ENCODE measurements at regions of chr1 and their contacts with region 1.

Region 1: DNA sequence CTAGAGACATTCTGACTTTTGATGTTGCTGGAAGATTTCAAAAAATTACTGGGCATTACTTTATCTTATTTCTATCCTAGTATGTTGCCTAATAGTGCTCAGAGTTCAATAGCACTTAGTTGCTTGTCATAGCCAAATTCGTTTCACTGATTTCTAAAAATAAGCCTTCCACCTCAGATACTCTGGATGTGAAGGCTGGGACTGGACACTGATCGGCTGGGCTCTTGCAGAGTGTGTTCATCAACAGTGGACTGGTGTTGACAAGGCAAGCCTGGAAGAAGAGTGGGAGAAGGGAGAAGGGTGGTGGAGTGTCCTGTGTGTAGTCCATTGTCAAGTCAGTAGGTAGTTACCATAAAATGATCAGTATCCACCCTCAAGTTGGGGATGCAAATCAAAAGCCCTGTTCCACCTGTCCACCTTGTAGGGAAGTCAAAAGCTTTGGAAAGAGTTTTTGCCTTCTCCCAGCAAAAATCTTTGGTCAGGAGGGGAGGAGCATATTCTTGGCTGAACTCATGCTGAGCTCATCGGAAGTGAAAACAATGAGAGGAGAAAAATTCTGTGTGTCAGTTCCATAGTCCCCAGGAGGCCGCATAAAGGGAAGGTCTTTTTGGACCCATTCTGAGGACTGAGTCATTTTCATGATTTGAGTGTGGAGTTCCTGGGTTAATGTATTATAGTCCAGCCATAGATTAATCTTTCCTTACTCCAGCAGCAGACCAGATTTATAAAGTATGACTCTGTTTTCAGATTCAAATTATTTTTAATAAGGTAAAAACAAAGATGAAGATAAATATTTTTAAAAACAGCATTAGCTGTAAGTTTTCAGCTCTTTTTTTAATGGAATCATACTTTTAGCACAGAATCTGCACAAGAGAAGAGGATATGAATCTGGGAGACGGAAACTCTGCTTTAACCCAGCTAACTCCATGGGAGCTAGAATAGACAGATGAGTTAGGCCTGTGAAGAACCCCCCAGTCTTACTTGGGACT is 99.5 kb upstream of the BMP8A start:
- DNase-seq: peak; percentile 24
- H3K4me3 ChIP-seq: no peak overlapping the region
- CTCF ChIP-seq: no peak

Region 2: GRCh38 chr1:39142401-39143151 is 249.4 kb before region 1 on chr1:
- CTCF ChIA-PET with region 1: no interaction called
- POLR2A ChIA-PET with region 1: no interaction called
- DNase-seq: no peak
- H3K4me3 ChIP-seq: no peak overlapping the region
- CTCF ChIP-seq: no peak

Region 3: GRCh38 chr1:39214998-39215873 is 176.7 kb before region 1 on chr1:
- CTCF ChIA-PET with region 1: no interaction called
- POLR2A ChIA-PET with region 1: no interaction called
- DNase-seq: no peak
- H3K4me3 ChIP-seq: no peak overlapping the region
- CTCF ChIP-seq: no peak

Region 4: GRCh38 chr1:39282537-39283216 is 109.3 kb before region 1 on chr1:
- CTCF ChIA-PET with region 1: no interaction called
- POLR2A ChIA-PET with region 1: no interaction called
- DNase-seq: no peak
- H3K4me3 ChIP-seq: no peak overlapping the region
- CTCF ChIP-seq: no peak

Region 5: DNA sequence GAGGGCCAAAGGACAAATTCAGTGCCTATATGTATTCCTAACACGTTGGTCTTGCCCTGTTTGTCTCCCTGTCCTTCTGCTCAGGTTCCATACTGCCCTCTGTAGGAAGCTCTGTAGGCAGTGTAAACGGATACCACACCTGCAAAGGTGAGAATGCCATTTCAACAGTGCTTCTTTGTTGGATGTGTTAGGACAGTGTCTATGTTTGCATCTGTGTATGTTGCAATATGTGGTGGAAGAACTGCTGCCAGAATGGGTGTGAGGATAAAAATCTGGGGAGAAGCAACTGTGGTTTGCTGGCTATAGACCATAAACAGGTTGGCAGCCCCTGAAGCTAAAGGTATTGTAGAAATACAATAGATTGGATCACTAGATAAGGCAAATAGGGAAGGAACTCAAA is 13.6 kb before region 1 on chr1:
- CTCF ChIA-PET with region 1: interaction called, 14 read pairs
- POLR2A ChIA-PET with region 1: no interaction called
- DNase-seq: no peak
- H3K4me3 ChIP-seq: no peak overlapping the region
- CTCF ChIP-seq: no peak

Region 6: GRCh38 chr1:39413902-39414528 is 22.0 kb after region 1 on chr1:
- CTCF ChIA-PET with region 1: interaction called, 90 read pairs
- POLR2A ChIA-PET with region 1: interaction called, 16 read pairs
- DNase-seq: no peak
- H3K4me3 ChIP-seq: peak overlapping the region; percentile 29
- CTCF ChIP-seq: no peak

Region 7: DNA sequence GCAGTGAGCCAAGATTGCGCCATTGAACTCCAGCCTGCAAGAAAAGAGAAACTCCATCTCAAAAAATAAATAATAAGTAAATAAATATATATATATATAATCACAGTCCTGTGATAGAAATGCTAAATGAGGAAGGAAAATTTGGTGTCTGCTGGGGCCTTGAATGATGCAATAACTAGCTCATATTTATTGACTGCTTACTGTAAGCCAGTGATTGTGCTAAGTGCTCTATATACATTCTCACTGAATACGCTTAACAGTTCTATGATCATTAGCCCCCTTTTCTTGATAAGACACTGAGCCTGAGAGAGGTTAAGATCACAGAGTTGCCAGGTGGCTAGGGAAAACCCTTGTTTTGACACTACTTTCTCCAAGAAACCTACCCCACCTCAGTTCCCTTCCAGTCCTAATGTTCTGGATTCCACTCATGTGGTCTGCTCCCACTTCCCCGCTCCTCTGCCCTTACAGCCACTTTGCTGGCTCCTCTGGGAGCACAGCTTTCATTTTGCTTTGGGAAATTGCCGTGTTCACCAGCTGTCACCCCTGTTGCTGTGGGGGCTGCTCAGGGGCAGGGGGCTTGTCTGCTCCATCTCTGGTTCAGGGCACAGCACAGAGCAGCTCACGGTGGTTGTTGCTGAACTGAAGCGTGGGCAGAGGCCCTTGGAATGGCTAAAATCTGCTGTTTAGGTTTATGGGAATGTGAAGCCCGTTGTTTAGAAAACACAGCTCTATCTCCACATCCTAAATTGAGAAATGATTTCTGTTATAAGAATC is 97.0 kb after region 1 on chr1:
- CTCF ChIA-PET with region 1: no interaction called
- POLR2A ChIA-PET with region 1: no interaction called
- DNase-seq: no peak
- H3K4me3 ChIP-seq: no peak overlapping the region
- CTCF ChIP-seq: no peak